Esophagus muscularis mucosa (tissue), 4 donors: ENCODE measurements at regions of chr19 and their contacts with region 1.

Region 1: DNA sequence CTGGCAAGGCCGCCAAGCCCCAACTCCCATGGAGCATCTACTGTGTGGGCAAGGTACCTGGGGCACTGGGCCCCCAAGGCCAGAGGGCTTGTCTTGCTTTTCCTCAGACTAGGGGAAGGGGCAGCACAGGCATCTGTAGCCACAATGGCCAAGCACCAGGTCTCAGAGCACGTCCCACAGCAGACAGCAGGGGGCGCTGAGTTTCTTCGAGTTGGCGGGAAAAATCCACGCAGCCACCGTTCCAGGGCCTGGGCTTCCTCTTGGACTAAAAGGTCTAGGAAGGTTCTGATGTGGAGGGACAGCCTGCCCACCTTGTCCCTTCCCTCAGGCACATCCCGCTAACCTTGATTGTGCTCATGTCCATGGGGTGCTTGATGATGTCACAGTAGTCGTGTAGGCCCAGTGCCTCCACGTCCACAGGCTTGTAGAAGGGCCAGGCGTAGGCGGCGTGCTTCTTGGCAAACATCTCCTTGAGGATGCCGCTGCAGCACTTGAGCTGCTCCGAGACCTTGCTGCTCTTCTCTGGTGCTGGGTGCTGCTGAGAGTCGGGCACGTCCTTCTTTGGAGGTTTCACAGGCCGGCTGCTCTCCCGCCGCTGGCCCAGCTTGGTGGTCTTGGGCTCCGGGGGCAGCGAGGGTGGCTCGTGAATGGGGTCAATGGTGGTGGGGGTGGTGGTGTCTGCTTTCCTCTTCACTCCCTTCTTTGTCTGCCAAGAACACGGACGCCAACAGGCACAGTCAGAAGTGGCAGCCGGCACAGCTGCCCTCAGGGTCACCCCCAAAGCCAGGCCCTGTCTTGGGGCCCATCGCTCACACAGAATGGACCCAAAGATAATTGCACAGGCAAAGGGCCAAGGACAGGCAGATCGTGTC is 32.0 kb upstream of the EPHX3 start:
- DNase-seq: no peak
- H3K4me3 ChIP-seq: no peak overlapping the region
- H3K27ac ChIP-seq: peak overlapping the region; percentile 58 to 92 (median 72)
- H3K4me1 ChIP-seq: peaks cover 53 to 64% (median 61%) of the 10 kb centered on the region in 4 donors
- H3K27me3 ChIP-seq: no peaks in the 10 kb centered on the region
- CTCF ChIP-seq: peak; percentile 81 to 85 (median 83)
- EP300 ChIP-seq: no peak
- POLR2A ChIP-seq: no peak

Region 2: GRCh38 chr19:15213715-15214381 is 50.4 kb before region 1 on chr19:
- intact Hi-C with region 1: no loop called
- DNase-seq: no peak
- H3K4me3 ChIP-seq: no peak overlapping the region
- H3K27ac ChIP-seq: peak overlapping the region in 3 of 4 donors; percentile 27 to 41 (median 36)
- H3K4me1 ChIP-seq: peaks cover 0 to 6% (median 0%) of the 10 kb centered on the region in 4 donors
- H3K27me3 ChIP-seq: peaks cover 0 to 5% (median 0%) of the 10 kb centered on the region in 4 donors
- CTCF ChIP-seq: no peak
- EP300 ChIP-seq: no peak
- POLR2A ChIP-seq: no peak

Region 3: DNA sequence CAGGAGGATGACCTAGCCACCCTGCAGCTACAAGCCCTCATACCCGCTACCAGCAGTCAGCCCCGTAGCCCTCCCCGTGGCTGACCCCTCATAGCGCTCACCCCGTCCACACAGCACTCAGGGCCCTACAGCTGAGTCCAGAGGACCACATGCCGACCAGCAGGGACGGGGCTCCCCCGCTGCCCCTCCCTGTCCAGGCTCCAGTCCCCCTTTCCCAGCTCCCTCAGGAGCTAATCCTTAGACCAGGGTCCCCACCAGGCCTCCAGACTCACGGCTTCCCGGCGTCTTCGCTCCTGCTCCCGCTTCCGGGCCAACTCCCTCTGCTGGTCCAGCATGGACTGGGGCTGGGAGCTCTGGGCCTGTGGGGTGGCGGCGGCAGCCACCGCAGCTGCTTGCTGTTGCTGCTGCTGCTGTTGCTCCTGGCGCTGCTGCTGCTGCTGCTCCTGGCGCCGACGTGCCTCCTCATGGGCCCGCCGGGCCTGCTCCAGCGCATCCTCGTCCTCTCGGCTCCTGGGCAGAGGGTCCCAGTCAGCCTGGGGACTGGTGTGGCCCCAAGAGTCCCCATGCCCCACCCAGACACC is 25.7 kb before region 1 on chr19:
- intact Hi-C with region 1: no loop called
- DNase-seq: no peak
- H3K4me3 ChIP-seq: no peak overlapping the region
- H3K27ac ChIP-seq: peak overlapping the region in 1 of 4 donors; percentile 7
- H3K4me1 ChIP-seq: peaks cover 0 to 12% (median 2%) of the 10 kb centered on the region in 4 donors
- H3K27me3 ChIP-seq: no peaks in the 10 kb centered on the region
- CTCF ChIP-seq: no peak
- EP300 ChIP-seq: no peak
- POLR2A ChIP-seq: no peak

Region 4: DNA sequence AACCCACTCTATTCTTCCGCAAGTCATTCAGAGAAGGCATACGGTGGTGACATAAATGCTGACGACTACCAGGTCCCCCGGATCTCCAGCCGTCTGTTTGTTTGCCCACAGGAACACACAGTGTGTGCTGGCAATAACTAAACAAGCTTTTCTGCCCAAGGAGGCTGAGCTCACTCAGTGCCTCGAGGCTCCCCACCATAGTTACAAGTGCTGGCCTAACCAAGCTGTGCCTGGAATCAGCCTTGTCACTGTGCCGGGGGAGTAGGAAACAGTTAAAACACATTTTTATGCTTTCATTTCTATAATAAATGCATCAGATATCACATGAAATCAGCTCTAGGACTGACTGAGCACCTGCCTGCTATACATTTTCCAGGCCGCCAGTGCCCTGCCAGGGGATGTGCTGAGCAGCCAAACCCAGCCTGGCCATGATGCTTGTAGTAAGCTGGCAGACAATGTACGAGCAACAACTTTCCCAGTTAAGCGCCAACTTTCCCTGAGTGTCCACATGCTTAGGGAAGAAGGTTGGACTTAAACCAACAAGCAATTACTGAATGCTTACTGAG is 39.9 kb after region 1 on chr19:
- intact Hi-C with region 1: no loop called
- DNase-seq: no peak
- H3K4me3 ChIP-seq: no peak overlapping the region
- H3K27ac ChIP-seq: peak overlapping the region; percentile 30 to 68 (median 44)
- H3K4me1 ChIP-seq: peaks cover 82 to 98% (median 92%) of the 10 kb centered on the region in 4 donors
- H3K27me3 ChIP-seq: no peaks in the 10 kb centered on the region
- CTCF ChIP-seq: no peak
- EP300 ChIP-seq: no peak
- POLR2A ChIP-seq: no peak

Region 5: DNA sequence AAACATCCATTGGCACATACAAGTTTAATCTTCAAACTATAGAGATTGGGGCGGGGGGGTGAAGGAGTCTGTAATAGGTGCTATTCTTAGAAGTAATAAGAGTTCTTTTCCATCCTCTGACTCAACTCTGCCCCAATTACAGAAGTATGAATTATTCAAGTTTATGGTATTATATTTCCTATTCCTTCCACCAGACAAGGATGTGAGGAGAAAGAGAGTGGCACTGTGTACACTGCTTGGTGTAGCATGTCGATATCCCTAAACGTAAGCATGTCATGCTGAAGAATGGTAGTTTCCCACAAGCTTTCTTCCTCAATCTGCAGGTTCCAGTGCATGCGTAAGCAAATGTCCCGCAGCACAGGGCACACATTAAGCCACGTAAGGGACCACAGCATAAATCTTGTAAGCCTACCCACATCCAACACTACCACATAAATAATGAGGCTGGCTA is 54.0 kb after region 1 on chr19:
- intact Hi-C with region 1: no loop called
- DNase-seq: no peak
- H3K4me3 ChIP-seq: no peak overlapping the region
- H3K27ac ChIP-seq: peak overlapping the region; percentile 22 to 73 (median 57)
- H3K4me1 ChIP-seq: peaks cover 93 to 100% (median 100%) of the 10 kb centered on the region in 4 donors
- H3K27me3 ChIP-seq: no peaks in the 10 kb centered on the region
- CTCF ChIP-seq: no peak
- EP300 ChIP-seq: no peak
- POLR2A ChIP-seq: no peak

Region 6: GRCh38 chr19:15331419-15332310 is 67.4 kb after region 1 on chr19:
- intact Hi-C with region 1: loop called (anchors 2 kb)
- DNase-seq: no peak
- H3K4me3 ChIP-seq: peak overlapping the region; percentile 92 to 99 (median 94)
- H3K27ac ChIP-seq: peak overlapping the region; percentile 87 to 96 (median 94)
- H3K4me1 ChIP-seq: peaks cover 55 to 63% (median 57%) of the 10 kb centered on the region in 4 donors
- H3K27me3 ChIP-seq: no peaks in the 10 kb centered on the region
- CTCF ChIP-seq: no peak
- EP300 ChIP-seq: no peak
- POLR2A ChIP-seq: no peak

Region 7: DNA sequence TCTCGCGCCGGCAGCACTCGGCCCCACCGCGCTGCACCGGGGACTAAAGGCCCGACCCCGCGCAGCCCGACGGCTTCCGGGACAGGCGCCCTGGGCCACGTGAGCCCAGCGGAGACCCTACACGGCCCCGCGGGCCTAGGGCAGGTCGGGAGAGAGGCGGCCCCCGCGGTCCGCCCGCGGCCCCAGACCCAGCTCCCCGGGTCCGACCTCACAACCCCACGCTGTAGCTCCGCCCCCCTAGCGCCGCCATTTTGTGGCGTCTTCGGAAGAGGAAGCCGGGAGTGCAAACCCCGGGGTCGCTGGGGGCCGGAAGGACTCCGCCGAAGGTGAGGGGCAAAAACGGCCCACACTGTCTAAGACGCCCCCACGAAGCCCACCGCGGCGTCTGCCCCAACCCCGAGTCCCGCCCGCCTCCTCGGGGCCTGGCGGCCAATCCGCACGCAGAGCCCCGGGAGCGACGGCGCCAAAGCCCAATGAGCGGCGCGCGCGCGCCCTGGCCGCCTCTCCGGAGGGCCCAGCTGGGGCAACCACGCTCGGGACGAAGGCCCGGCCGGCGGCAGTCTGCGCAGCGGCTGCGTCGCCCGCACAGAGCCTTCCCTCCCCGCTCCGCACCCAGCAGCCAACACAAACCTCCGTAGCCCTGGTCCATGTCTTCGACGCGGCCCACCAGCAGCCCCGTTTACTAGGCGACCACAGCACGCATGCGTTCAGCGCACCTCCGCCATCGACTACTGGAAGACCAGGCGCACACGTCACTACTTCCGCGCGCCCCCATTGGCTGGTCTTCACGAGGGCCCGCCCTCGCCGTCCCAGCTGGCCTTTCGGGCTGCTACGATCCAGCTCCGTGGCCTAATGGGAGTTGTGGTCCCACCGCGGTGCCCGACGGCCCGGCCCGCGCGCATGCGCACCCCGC is 115.0 kb after region 1 on chr19 and contains the start of gene AKAP8:
- intact Hi-C with region 1: loop called (anchors 2 kb)
- DNase-seq: peak; percentile 100
- H3K4me3 ChIP-seq: peak within 1 kb of the TSS; percentile 74 to 99 (median 90)
- H3K27ac ChIP-seq: peak within 1 kb of the TSS; percentile 92 to 99 (median 98)
- H3K4me1 ChIP-seq: peaks cover 44 to 52% (median 50%) of the 10 kb centered on the region in 4 donors
- H3K27me3 ChIP-seq: no peaks in the 10 kb centered on the region
- CTCF ChIP-seq: no peak
- EP300 ChIP-seq: no peak
- POLR2A ChIP-seq: peak; percentile 55
- total RNA-seq, gene AKAP8: 25.2 to 34.3 (median 29.6) TPM

Region 8: GRCh38 chr19:15432629-15433518 is 168.6 kb after region 1 on chr19:
- intact Hi-C with region 1: loop called (anchors 5 kb)
- DNase-seq: no peak
- H3K4me3 ChIP-seq: peak overlapping the region; percentile 91 to 97 (median 92)
- H3K27ac ChIP-seq: peak overlapping the region; percentile 88 to 97 (median 95)
- H3K4me1 ChIP-seq: peaks cover 40 to 73% (median 64%) of the 10 kb centered on the region in 4 donors
- H3K27me3 ChIP-seq: no peaks in the 10 kb centered on the region
- CTCF ChIP-seq: no peak
- EP300 ChIP-seq: no peak
- POLR2A ChIP-seq: no peak

Region 9: DNA sequence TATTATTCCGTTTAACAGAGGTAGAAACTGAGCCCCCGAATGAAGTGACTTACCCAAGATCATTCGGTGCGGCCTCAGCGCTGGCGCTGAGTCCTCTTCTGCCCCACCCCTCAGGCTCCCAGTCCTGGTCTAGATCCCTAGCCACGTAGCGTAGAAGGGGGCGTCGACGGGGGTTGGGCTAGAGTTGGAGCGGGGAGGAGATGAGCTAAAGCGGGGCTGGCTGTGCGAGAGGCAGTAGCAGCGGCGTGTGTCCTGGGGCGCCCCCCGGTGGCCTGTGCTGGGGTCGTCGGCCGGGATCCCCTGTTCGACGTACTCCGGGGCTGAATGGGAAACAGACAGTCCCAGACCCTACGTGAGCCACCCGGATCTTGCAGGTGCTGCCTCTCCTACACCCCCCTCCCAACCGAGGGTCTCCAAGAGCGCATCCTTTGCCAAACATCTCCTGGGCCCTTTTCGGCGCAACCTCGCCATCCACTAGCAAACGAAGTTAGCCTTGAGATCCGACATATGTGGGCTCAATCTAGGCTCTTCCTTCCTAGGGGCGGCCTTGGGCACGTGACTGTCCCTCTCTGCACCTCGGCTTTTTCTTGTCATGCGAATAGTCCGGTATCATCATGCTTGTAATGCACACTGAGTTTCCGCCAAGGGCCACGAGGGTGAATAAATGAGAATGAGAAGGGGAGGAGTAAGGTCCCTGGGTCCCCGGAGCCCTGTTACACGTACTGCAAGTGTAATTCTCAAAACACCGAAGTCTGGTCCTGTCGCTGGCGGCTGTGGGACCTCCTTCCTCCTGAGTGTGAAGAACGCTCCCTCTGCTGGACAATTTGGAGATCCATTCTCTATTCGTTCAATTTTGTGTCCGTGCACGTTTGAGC is 291.7 kb after region 1 on chr19:
- intact Hi-C with region 1: loop called (anchors 2 kb)
- DNase-seq: peak; percentile 97
- H3K4me3 ChIP-seq: peak overlapping the region; percentile 25 to 48 (median 38)
- H3K27ac ChIP-seq: no peak overlapping the region
- H3K4me1 ChIP-seq: peaks cover 10 to 25% (median 22%) of the 10 kb centered on the region in 4 donors
- H3K27me3 ChIP-seq: peaks cover 0 to 73% (median 6%) of the 10 kb centered on the region in 4 donors
- CTCF ChIP-seq: peak; percentile 73 to 80 (median 77)
- EP300 ChIP-seq: no peak
- POLR2A ChIP-seq: no peak